Activated T-helper 2 cell treated with anti-CD3 and anti-CD28 coated beads, Interferon-gamma antibody, Interleukin-2, Interleukin-4, amounts not matched to agents 10 μg/mL and 5 μg/mL and 100 μg/mL, durations not matched to agents 14 hours and 24 hours and 36 hours (primary cell): ENCODE measurements at regions of chr2 and their contacts with region 1.

Region 1: DNA sequence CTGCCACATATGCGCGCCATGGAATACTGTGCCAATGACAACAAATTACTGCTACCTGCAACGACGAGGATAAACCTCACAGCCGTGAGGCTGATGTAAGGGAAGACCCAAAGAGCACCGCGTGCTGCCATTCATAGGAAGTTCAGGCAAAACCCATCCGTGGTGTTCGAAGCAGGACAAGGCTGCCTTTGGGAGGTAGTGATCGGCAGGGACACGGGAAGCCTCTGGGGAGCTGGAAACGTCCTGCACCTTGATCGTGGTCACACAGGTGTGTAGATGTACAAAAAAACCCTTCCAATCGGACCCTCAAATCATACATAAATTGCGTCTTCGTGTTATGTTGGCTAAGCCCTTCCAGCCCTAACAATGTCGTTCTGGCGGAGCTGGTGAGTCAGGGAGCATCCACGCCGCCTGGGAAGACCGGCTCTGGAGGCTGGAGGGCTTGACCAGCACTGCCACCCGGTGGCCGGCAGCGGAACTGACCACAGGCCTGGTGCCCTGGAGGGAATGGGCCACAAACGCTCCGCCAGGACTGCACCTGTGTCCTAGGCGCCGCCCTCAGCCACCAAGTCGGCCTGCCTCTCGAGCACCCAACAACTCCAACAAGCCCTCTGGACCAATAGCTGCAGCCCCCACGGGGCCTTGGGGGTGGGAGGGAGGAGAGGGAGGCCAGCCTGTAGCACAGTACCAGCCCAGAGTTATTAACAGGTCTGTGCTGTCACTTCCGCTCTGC is 4.1 kb upstream of the NEURL3 start:
- DNase-seq: peak; percentile 52
- H3K4me3 Mint-ChIP-seq: no peak overlapping the region
- H3K27ac Mint-ChIP-seq: no peak overlapping the region
- H3K4me1 Mint-ChIP-seq: peaks cover 23% of the 10 kb centered on the region
- H3K27me3 Mint-ChIP-seq: no peaks in the 10 kb centered on the region

Region 2: GRCh38 chr2:96407041-96407918 is 102.0 kb before region 1 on chr2:
- intact Hi-C with region 1: loop called (anchors 1 kb)
- DNase-seq: peak; percentile 64
- H3K4me3 Mint-ChIP-seq: no peak overlapping the region
- H3K27ac Mint-ChIP-seq: peak overlapping the region; percentile 76
- H3K4me1 Mint-ChIP-seq: peaks cover 17% of the 10 kb centered on the region
- H3K27me3 Mint-ChIP-seq: no peaks in the 10 kb centered on the region

Region 3: GRCh38 chr2:96470636-96471035 is 38.6 kb before region 1 on chr2:
- intact Hi-C with region 1: loop called (anchors 1 kb)
- DNase-seq: peak; percentile 24
- H3K4me3 Mint-ChIP-seq: no peak overlapping the region
- H3K27ac Mint-ChIP-seq: no peak overlapping the region
- H3K4me1 Mint-ChIP-seq: peaks cover 11% of the 10 kb centered on the region
- H3K27me3 Mint-ChIP-seq: peaks cover 3% of the 10 kb centered on the region

Region 4: DNA sequence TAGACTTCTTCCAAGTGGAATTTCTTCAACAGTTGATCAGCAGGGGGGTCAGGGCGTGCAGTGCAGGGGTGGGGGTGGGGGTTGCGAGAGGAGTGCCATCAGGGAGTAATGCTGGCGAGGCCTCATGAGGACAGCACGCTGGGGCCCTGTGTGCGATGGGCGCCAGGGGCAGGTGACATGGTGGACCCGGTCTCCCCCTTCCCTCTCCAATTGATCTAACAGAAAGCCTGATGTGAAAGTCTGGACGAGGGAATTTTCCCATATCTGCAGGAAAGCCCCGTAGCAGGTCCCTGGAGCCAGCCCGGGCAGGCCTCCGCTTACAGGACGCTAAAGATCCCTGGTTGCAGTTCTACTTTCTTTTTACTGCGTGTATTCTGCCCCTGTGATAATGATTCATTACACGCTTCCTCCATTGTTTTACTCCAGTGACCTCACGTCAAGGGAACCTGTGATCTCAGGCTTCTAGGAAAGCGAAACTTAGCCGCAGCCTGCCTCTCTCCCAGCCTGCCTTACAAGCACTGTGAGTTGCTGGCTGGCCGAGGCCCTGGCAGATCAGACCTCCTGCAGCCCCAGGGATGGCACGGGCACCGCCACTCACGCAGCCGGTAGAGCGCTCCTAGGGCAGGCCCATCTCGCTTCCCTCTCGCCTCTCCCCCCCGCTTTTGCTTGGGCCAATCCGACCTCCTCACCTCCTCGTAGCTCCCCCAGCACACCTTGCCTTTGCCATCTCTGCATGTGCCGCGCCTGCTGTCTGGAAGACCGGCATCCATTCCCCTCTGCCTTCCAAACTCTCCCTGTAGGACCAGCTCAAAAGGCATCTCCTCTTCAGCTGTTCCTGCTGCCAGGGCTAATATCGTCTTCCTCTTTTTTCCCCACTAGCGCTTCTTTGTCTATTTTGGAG is 23.3 kb before region 1 on chr2:
- intact Hi-C with region 1: loop called (anchors 1 kb)
- DNase-seq: peak; percentile 87
- H3K4me3 Mint-ChIP-seq: peak overlapping the region; percentile 90
- H3K27ac Mint-ChIP-seq: peak overlapping the region; percentile 98
- H3K4me1 Mint-ChIP-seq: peaks cover 47% of the 10 kb centered on the region
- H3K27me3 Mint-ChIP-seq: no peaks in the 10 kb centered on the region

Region 5: GRCh38 chr2:96527286-96528005 is 18.2 kb after region 1 on chr2:
- intact Hi-C with region 1: loop called (anchors 2 kb)
- DNase-seq: peak; percentile 70
- H3K4me3 Mint-ChIP-seq: peak overlapping the region; percentile 66
- H3K27ac Mint-ChIP-seq: peak overlapping the region; percentile 88
- H3K4me1 Mint-ChIP-seq: peaks cover 91% of the 10 kb centered on the region
- H3K27me3 Mint-ChIP-seq: no peaks in the 10 kb centered on the region

Region 6: GRCh38 chr2:96554293-96555145 is 45.2 kb after region 1 on chr2:
- intact Hi-C with region 1: loop called (anchors 5 kb)
- DNase-seq: peak; percentile 58
- H3K4me3 Mint-ChIP-seq: no peak overlapping the region
- H3K27ac Mint-ChIP-seq: no peak overlapping the region
- H3K4me1 Mint-ChIP-seq: peaks cover 19% of the 10 kb centered on the region
- H3K27me3 Mint-ChIP-seq: no peaks in the 10 kb centered on the region